PC-9 (cell line): ENCODE measurements at regions of chr10 and their contacts with region 1.

Region 1: DNA sequence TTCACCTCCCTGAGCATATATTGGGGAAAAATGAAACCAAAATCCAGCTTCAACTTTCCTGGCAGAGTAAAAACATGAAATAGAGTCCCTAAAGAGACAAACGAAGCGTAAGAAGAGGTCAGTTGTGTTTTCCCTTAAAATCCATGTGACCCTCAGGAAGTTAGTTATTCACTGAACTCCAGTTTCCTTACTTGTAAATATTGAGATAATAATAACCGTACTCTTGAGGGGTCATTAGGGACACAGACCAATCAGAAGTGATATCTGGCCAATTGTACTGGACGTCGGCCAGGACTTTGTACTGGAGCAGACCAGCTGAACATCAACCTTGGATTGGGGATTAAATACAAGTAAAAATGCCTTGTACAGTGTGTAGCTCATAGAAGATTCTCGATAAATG is 167.0 kb downstream of the GATA3 start:
- DNase-seq: no peak
- H3K4me3 ChIP-seq: no peak overlapping the region
- H3K27ac ChIP-seq: no peak overlapping the region
- H3K4me1 ChIP-seq: no peaks in the 10 kb centered on the region
- H3K27me3 ChIP-seq: no peaks in the 10 kb centered on the region
- CTCF ChIP-seq: no peak

Region 2: DNA sequence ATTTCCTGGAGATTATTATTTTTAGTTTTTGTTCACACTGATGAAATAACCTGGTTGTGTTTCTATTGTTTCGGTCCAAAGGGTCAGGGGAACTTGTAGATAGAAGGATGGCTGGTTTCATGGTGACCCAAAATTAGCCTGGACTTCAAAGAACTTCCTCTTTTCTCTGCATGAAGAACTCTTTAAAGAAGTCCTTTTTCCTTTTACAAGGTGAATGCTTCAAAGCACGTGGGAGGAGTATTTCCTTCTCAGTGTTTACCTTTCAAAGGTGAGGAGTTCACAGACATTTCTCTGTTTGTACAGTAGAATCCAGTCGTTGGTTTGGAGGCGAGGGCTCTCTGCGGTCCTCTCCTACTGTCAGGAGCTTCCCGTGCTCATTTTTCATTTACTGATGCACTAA is 394.7 kb after region 1 on chr10:
- CTCF ChIA-PET with region 1: no interaction called
- POLR2A ChIA-PET with region 1: interaction called, 55 read pairs
- intact Hi-C with region 1: no loop called
- DNase-seq: peak; percentile 43 to 80
- H3K4me3 ChIP-seq: no peak overlapping the region
- H3K27ac ChIP-seq: peak overlapping the region; percentile 70
- H3K4me1 ChIP-seq: peaks cover 36% of the 10 kb centered on the region
- H3K27me3 ChIP-seq: no peaks in the 10 kb centered on the region
- CTCF ChIP-seq: no peak

Region 3: GRCh38 chr10:9188147-9188949 is 966.9 kb after region 1 on chr10:
- CTCF ChIA-PET with region 1: no interaction called
- POLR2A ChIA-PET with region 1: interaction called, 13 read pairs
- intact Hi-C with region 1: no loop called
- DNase-seq: peak in 1 of 2 experiments; percentile 83
- H3K4me3 ChIP-seq: no peak overlapping the region
- H3K27ac ChIP-seq: peak overlapping the region; percentile 40
- H3K4me1 ChIP-seq: 0 out of 2 replicates have a peak, but pooled peaks cover 11% of the 10 kb centered on the region
- H3K27me3 ChIP-seq: no peaks in the 10 kb centered on the region
- CTCF ChIP-seq: no peak